ENCODE measurements at regions of chr2 and their contacts with region 1.

Region 1: GRCh38 chr2:154847703-154848102 is 149.2 kb downstream of the KCNJ3 start:
- DNase-seq: no peak
- ATAC-seq: no peak
- H3K4me3 ChIP-seq: no peak overlapping the region
- H3K27ac ChIP-seq: no peak overlapping the region
- H3K4me1 ChIP-seq: no peaks in the 10 kb centered on the region
- H3K27me3 ChIP-seq: no peaks in the 10 kb centered on the region
- CTCF ChIP-seq: no peak

Region 2: DNA sequence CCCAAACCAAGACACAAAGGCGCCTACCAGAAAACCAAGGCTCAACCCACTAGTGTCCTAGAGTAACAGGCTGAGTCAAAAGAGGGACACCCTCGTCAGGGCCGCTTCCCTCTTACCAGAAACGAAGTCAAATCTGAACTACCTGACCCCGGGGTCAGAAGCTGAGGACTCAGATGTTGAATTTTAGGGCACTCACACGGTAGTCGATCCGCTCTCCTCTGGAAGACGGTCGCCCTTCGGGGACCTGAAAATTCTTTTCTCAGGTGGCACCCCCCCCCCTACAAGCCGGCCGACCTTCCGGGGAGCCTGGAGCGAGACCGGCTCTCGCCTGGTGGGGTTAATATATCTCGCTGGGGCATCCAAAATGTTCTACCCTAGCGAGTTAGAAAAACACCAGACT is 270.3 kb before region 1 on chr2:
- CTCF ChIA-PET with region 1: interaction called, 11 read pairs
- POLR2A ChIA-PET with region 1: no interaction called
- in situ Hi-C with region 1: no loop called
- intact Hi-C with region 1: no loop called
- DNase-seq: no peak
- ATAC-seq: no peak
- H3K4me3 ChIP-seq: no peak overlapping the region
- H3K27ac ChIP-seq: no peak overlapping the region
- H3K4me1 ChIP-seq: no peaks in the 10 kb centered on the region
- H3K27me3 ChIP-seq: no peaks in the 10 kb centered on the region
- CTCF ChIP-seq: no peak

Measured in Panc1 (cell line).